T47D (cell line): ENCODE measurements at regions of chr10 and their contacts with region 1.

Region 1: DNA sequence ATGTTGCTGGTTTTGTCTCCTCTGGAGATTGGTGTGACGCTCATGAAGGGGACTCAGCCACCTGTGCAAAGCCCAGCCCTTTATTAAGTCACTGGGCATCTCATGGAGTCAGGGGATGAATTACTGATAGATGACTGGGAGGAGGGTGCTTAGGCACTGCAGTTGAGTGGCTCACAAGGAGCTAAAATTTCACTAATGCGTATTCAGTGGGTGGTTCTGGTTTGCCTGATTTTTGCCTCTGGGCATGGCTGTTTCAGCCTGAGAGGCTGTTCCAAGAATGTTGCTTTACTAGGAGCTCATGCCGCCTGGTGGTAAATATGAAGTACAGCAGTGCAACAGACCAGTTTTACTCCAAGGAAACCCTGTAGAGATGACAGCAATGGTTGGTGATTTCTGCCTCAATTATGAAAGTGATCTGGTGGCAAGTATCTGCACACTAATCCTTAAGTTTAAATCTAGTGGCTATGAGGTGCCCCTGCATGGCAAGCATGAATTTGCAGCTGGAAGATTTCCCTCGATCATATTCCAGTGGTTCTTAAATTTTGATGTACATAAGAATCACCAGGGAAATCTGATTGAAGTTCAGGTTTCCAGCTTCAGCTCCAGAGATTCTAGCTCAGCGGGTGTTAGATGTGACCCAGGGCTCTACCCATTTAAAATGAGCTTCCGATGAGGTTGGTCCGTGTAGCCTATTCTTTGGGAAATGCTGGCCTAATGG is 19.9 kb downstream of the ACTA2 start:
- DNase-seq: peak; percentile 30 to 95

Region 2: GRCh38 chr10:88680958-88681357 is 251.7 kb before region 1 on chr10:
- in situ Hi-C with region 1: no loop called
- DNase-seq: no peak

Region 3: GRCh38 chr10:89217057-89217990 is 284.6 kb after region 1 on chr10:
- in situ Hi-C with region 1: loop called (anchors 25 kb)
- DNase-seq: peak in 1 of 2 experiments; percentile 80